ENCODE measurements at regions of chr1 and their contacts with region 1.

Region 1: GRCh38 chr1:182962554-182963115 is 9.7 kb upstream of the SHCBP1L start:
- DNase-seq: peak; percentile 62
- ATAC-seq: peak; percentile 100
- H3K4me3 ChIP-seq: peak overlapping the region; percentile 57; the same call in 1 of the 2 replicates
- H3K27ac ChIP-seq: peak overlapping the region; percentile 56
- H3K4me1 ChIP-seq: 0 out of 2 replicates have a peak, but pooled peaks cover 5% of the 10 kb centered on the region
- H3K27me3 ChIP-seq: no peaks in the 10 kb centered on the region
- CTCF ChIP-seq: peak; percentile 88 to 95 (median 93)
- EP300 ChIP-seq: no peak
- POLR2A ChIP-seq: peak; percentile 48; the same call in 1 of the 2 replicates
- RAD21 ChIP-seq: peak; percentile 99

Region 2: GRCh38 chr1:182855911-182856310 is 106.7 kb before region 1 on chr1:
- CTCF ChIA-PET with region 1: no interaction called
- POLR2A ChIA-PET with region 1: no interaction called
- RAD21 ChIA-PET with region 1: no interaction called
- SMC1A ChIA-PET with region 1: no interaction called
- in situ Hi-C with region 1: no loop called
- intact Hi-C with region 1: no loop called
- DNase-seq: no peak
- ATAC-seq: no peak
- H3K4me3 ChIP-seq: no peak overlapping the region
- H3K27ac ChIP-seq: no peak overlapping the region
- H3K4me1 ChIP-seq: no peaks in the 10 kb centered on the region
- H3K27me3 ChIP-seq: no peaks in the 10 kb centered on the region
- CTCF ChIP-seq: no peak
- EP300 ChIP-seq: no peak
- POLR2A ChIP-seq: no peak
- RAD21 ChIP-seq: no peak

Region 3: DNA sequence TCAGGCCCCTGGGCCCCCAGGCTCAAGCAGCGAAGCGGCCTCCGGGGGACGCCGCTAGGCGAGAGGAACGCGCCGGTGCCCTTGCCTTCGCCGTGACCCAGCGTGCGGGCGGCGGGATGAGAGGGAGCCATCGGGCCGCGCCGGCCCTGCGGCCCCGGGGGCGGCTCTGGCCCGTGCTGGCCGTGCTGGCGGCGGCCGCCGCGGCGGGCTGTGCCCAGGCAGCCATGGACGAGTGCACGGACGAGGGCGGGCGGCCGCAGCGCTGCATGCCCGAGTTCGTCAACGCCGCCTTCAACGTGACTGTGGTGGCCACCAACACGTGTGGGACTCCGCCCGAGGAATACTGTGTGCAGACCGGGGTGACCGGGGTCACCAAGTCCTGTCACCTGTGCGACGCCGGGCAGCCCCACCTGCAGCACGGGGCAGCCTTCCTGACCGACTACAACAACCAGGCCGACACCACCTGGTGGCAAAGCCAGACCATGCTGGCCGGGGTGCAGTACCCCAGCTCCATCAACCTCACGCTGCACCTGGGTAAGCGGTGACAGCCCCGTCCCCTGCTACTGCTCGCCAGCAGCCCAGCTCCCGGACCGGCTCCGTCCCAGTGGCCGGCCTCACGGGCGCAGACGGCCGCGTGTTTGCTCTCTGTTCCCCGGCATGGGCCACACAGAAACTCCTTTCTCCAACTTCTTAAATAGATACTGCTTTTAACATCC is 61.1 kb after region 1 on chr1:
- CTCF ChIA-PET with region 1: interaction called, 34 read pairs
- POLR2A ChIA-PET with region 1: interaction called, 5 read pairs
- RAD21 ChIA-PET with region 1: interaction called, 33 read pairs
- SMC1A ChIA-PET with region 1: interaction called, 14 read pairs
- in situ Hi-C with region 1: no loop called
- intact Hi-C with region 1: loop called (anchors 1 kb)
- DNase-seq: no peak
- ATAC-seq: peak; percentile 77
- H3K4me3 ChIP-seq: peak overlapping the region; percentile 74
- H3K27ac ChIP-seq: peak overlapping the region; percentile 5
- H3K4me1 ChIP-seq: peaks cover 20% of the 10 kb centered on the region
- H3K27me3 ChIP-seq: no peaks in the 10 kb centered on the region
- CTCF ChIP-seq: peak; percentile 64 to 76 (median 68)
- EP300 ChIP-seq: no peak
- POLR2A ChIP-seq: peak; percentile 65
- RAD21 ChIP-seq: peak; percentile 47; the same call in 1 of the 2 replicates

Region 4: GRCh38 chr1:183101841-183102276 is 139.2 kb after region 1 on chr1:
- CTCF ChIA-PET with region 1: interaction called, 7 read pairs
- POLR2A ChIA-PET with region 1: no interaction called
- RAD21 ChIA-PET with region 1: interaction called, 5 read pairs
- SMC1A ChIA-PET with region 1: interaction called, 10 read pairs
- in situ Hi-C with region 1: no loop called
- intact Hi-C with region 1: no loop called
- DNase-seq: no peak
- ATAC-seq: peak; percentile 90
- H3K4me3 ChIP-seq: no peak overlapping the region
- H3K27ac ChIP-seq: no peak overlapping the region
- H3K4me1 ChIP-seq: peaks cover 8% of the 10 kb centered on the region; the same call in 1 of the 2 replicates
- H3K27me3 ChIP-seq: no peaks in the 10 kb centered on the region
- CTCF ChIP-seq: no peak
- EP300 ChIP-seq: no peak
- POLR2A ChIP-seq: no peak
- RAD21 ChIP-seq: no peak

Region 5: GRCh38 chr1:183209533-183210158 is 247.0 kb after region 1 on chr1:
- CTCF ChIA-PET with region 1: interaction called, 11 read pairs
- POLR2A ChIA-PET with region 1: no interaction called
- RAD21 ChIA-PET with region 1: no interaction called
- SMC1A ChIA-PET with region 1: interaction called, 3 read pairs
- in situ Hi-C with region 1: no loop called
- intact Hi-C with region 1: no loop called
- DNase-seq: no peak
- ATAC-seq: peak; percentile 97
- H3K4me3 ChIP-seq: no peak overlapping the region
- H3K27ac ChIP-seq: no peak overlapping the region
- H3K4me1 ChIP-seq: no peaks in the 10 kb centered on the region
- H3K27me3 ChIP-seq: no peaks in the 10 kb centered on the region; a peak in 1 of 4 replicates
- CTCF ChIP-seq: no peak
- EP300 ChIP-seq: no peak
- POLR2A ChIP-seq: no peak
- RAD21 ChIP-seq: no peak

Region 6: DNA sequence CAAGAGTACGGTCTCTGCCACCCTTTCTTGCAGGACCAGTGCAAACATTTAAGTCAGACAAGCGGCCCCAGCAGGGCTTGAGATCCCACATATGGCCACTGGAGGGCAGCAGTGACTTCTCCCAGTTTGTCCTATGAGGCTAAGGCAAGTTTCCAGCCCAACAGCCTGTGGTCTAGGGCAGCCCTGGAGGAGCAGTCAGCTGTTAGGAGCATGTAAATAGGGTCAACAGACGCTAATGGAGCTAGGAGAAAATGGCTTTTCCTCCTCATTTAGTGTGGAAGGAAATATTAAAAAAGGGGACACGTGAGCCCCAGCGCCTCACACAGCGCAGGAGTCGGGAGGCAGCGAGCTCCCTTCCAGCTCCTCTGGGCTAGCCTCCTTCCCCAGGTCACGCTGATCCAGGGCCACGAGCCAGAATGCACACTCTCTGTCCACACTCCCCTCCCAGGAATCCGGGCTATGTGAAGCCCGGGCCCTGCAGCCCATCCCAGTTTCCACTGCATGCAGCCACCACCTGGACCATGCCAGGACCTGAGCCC is 319.0 kb after region 1 on chr1:
- CTCF ChIA-PET with region 1: interaction called, 77 read pairs
- POLR2A ChIA-PET with region 1: no interaction called
- RAD21 ChIA-PET with region 1: interaction called, 23 read pairs
- SMC1A ChIA-PET with region 1: interaction called, 15 read pairs
- in situ Hi-C with region 1: no loop called
- intact Hi-C with region 1: loop called (anchors 1 kb)
- DNase-seq: peak; percentile 54
- ATAC-seq: peak; percentile 91
- H3K4me3 ChIP-seq: no peak overlapping the region
- H3K27ac ChIP-seq: no peak overlapping the region
- H3K4me1 ChIP-seq: peaks cover 3% of the 10 kb centered on the region; the same call in 1 of the 2 replicates
- H3K27me3 ChIP-seq: no peaks in the 10 kb centered on the region
- CTCF ChIP-seq: peak; percentile 85 to 93 (median 88)
- EP300 ChIP-seq: no peak
- POLR2A ChIP-seq: no peak
- RAD21 ChIP-seq: peak; percentile 88

Region 7: DNA sequence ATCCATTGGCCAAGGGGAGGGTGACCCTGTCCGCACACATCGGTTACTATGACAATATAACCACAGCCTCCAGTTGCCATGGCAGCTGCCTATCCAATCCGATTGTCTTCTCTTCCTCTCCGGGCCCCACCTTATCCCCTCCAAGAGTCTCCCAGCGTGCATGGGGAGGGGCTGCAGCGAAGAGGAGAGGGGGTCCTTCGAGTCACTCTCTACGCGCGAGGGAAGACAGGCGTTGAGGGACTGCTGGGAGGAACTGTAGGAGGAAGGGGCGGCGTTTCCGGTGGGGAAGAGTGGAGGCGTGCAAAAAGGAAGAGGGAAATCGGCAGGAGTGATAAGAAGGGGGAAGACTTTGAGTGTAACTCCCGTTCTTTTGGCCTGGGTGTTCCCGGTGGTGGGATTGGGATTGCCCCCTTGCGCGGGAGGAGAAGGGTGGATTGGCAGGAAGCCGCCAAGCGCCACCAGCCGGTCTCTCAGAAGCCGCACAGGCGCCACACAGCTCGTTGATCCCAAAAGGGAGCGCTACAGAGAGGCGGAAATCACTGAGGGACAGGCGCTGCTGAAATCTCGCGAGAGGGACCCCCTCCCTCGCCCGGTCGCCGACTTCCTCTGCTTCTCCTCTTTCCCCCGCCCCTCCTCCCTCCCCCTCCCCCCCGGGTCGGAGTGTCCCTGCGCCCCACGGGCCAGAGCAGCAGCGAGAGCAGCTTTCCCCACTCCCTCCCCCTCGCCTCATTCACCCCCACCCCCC is 509.3 kb after region 1 on chr1:
- CTCF ChIA-PET with region 1: interaction called, 3 read pairs
- POLR2A ChIA-PET with region 1: no interaction called
- RAD21 ChIA-PET with region 1: no interaction called
- SMC1A ChIA-PET with region 1: no interaction called
- in situ Hi-C with region 1: no loop called
- intact Hi-C with region 1: loop called (anchors 10 kb)
- DNase-seq: peak; percentile 90
- ATAC-seq: peak; percentile 69
- H3K4me3 ChIP-seq: peak overlapping the region; percentile 87
- H3K27ac ChIP-seq: peak overlapping the region; percentile 99
- H3K4me1 ChIP-seq: peaks cover 8% of the 10 kb centered on the region
- H3K27me3 ChIP-seq: no peaks in the 10 kb centered on the region
- CTCF ChIP-seq: peak in 2 of 3 experiments; percentile 21 to 38; a peak in 3 of 6 replicates
- EP300 ChIP-seq: no peak
- POLR2A ChIP-seq: peak; percentile 56
- RAD21 ChIP-seq: no peak

Measured in GM12878 (cell line).